A673 (cell line): ENCODE measurements at regions of chr18 and their contacts with region 1.

Region 1: GRCh38 chr18:62262061-62262460 is 63.0 kb upstream of the TNFRSF11A start:
- DNase-seq: no peak
- H3K4me3 ChIP-seq: no peak overlapping the region
- H3K27ac ChIP-seq: no peak overlapping the region
- H3K4me1 ChIP-seq: no peaks in the 10 kb centered on the region
- H3K27me3 ChIP-seq: no peaks in the 10 kb centered on the region
- CTCF ChIP-seq: no peak

Region 2: GRCh38 chr18:61093965-61094364 is 1168.1 kb before region 1 on chr18:
- CTCF ChIA-PET with region 1: no interaction called
- POLR2A ChIA-PET with region 1: no interaction called
- intact Hi-C with region 1: no loop called
- DNase-seq: no peak
- H3K4me3 ChIP-seq: no peak overlapping the region
- H3K27ac ChIP-seq: no peak overlapping the region
- H3K4me1 ChIP-seq: no peaks in the 10 kb centered on the region
- H3K27me3 ChIP-seq: peaks cover 43% of the 10 kb centered on the region
- CTCF ChIP-seq: no peak

Region 3: DNA sequence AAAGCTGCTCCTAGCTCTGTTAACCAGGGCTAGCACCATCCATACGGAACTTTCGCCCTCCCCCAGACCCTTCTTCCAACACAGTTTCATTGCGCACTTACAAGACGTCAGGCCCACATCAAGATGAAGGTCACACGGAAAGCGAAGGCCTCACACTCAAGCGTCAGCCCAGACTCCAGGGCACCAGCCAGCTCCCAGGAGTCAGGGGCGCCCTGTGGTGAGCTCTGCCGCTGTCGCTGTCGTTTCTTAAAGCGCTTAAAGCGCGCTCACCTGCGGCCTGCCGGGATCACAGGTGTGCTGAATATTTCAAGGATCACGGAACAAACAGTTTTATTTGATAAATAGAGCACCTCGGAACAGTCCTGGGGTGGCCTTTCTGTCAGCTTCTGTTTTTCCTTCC is 765.7 kb before region 1 on chr18:
- CTCF ChIA-PET with region 1: no interaction called
- POLR2A ChIA-PET with region 1: no interaction called
- intact Hi-C with region 1: no loop called
- DNase-seq: no peak
- H3K4me3 ChIP-seq: no peak overlapping the region
- H3K27ac ChIP-seq: no peak overlapping the region
- H3K4me1 ChIP-seq: no peaks in the 10 kb centered on the region
- H3K27me3 ChIP-seq: peaks cover 15% of the 10 kb centered on the region
- CTCF ChIP-seq: no peak

Region 4: GRCh38 chr18:62281684-62282083 is 19.6 kb after region 1 on chr18:
- CTCF ChIA-PET with region 1: no interaction called
- POLR2A ChIA-PET with region 1: no interaction called
- intact Hi-C with region 1: loop called (anchors 1 kb)
- DNase-seq: no peak
- H3K4me3 ChIP-seq: no peak overlapping the region
- H3K27ac ChIP-seq: no peak overlapping the region
- H3K4me1 ChIP-seq: peaks cover 5% of the 10 kb centered on the region
- H3K27me3 ChIP-seq: no peaks in the 10 kb centered on the region
- CTCF ChIP-seq: no peak